Caco-2 (cell line): ENCODE measurements at regions of chr2 and their contacts with region 1.

Region 1: DNA sequence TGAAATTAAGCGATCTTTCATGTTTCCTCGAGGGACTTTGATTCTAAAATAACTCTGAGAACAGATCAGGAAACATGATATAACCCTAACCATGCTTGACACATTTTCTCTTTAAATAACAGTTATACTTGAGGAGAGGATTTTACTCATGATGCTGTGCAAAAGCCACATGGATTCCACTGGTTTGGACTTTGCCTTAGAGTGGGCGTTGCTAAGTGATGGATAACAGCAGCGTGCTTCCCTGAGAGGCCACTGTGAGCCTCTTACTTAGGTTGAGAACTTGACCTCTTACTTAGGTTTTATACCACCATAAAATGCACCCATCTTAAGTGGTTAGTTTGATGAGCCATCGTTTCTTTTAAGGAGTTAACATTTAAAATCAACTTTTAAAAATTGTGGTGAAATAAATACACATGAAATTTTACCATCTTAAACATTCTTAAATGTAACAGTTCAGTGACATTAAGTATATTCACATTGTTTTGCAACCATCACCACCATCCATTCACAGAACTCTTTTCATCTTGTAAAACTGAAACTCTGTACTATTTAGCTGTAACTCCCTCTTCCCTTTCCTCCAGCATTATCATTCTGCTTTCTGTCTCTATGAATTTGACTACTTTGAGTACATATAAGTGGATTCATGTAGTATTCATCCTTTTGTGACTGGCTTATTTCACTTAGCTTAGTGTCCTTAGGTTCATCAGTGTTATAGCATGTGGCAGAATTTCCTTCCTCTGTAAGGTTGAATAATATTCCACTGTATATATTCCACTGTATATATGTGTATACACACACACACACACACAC is 22.6 kb downstream of the ANXA4 start:
- DNase-seq: peak; percentile 76 to 79
- H3K4me3 ChIP-seq: no peak overlapping the region
- H3K4me3 Mint-ChIP-seq: peak overlapping the region; percentile 42
- H3K27ac Mint-ChIP-seq: peak overlapping the region; percentile 17
- H3K4me1 ChIP-seq: peaks cover 47% of the 10 kb centered on the region
- H3K4me1 Mint-ChIP-seq: peaks cover 54% of the 10 kb centered on the region
- H3K27me3 ChIP-seq: no peaks in the 10 kb centered on the region
- H3K27me3 Mint-ChIP-seq: no peaks in the 10 kb centered on the region
- CTCF ChIP-seq: no peak

Region 2: DNA sequence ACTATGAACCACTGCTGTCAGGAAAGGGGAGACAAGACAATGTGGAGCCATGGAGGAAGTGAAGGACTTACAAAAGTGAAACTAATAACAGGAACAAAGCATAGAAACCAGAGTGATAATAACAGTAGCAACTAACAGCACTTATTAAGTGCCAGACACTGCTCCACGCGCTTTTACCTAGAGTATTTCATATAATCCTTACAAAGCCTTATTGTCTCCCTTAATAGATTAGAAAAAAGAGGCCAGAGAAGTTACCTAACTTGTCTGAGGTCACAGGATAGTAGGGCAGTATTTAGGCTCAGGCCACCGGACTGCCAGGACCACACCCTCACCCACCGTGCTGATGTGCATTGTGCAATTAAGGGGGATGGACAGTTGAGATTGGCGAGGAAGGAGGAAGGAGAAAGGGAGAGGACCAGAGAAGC is 228.7 kb before region 1 on chr2:
- CTCF ChIA-PET with region 1: no interaction called
- POLR2A ChIA-PET with region 1: no interaction called
- intact Hi-C with region 1: no loop called
- DNase-seq: no peak
- H3K4me3 ChIP-seq: no peak overlapping the region
- H3K4me3 Mint-ChIP-seq: no peak overlapping the region
- H3K27ac Mint-ChIP-seq: no peak overlapping the region
- H3K4me1 ChIP-seq: peaks cover 17% of the 10 kb centered on the region
- H3K4me1 Mint-ChIP-seq: peaks cover 13% of the 10 kb centered on the region
- H3K27me3 ChIP-seq: no peaks in the 10 kb centered on the region
- H3K27me3 Mint-ChIP-seq: no peaks in the 10 kb centered on the region
- CTCF ChIP-seq: no peak

Region 3: DNA sequence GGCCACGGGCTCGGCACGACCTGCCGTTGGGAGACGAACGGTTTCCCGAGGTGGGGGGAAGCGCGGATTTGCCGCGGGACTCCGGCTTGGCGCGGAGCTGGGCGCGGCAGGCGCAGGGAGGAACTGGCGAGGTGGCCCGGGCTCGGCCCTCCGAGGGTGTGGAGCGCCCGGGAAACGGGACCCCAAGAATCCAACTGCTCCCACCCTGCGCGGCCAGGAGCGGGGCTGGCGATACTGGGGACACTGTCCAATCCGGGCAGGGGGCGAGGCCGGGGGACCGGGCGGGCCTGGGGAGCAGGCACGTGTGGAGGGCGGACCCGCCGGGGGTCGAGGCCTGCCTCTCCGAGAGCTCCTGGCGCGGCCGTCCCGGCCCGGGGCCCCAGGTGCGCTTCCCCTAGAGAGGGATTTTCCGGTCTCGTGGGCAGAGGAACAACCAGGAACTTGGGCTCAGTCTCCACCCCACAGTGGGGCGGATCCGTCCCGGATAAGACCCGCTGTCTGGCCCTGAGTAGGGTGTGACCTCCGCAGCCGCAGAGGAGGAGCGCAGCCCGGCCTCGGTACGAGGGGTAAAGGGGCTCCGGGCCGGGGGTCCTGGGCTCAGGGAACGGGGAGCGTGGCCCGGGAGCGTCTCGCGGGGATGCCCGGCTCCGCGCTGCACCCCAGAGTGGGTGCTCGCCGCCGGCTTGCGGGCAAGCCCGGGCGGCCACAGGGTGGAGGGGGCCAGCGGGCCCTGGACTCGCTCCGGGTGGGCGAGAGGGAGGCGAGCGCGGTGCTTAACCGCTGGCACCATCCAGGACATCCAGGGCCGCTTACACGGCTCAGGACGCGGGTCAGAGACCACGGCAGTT is 22.6 kb before region 1 on chr2 and contains the start of gene ANXA4:
- CTCF ChIA-PET with region 1: no interaction called
- POLR2A ChIA-PET with region 1: interaction called, 4 read pairs
- intact Hi-C with region 1: loop called (anchors 2 kb)
- DNase-seq: peak; percentile 92 to 93
- H3K4me3 ChIP-seq: peak within 1 kb of the TSS; percentile 78
- H3K4me3 Mint-ChIP-seq: peak within 1 kb of the TSS; percentile 97
- H3K27ac Mint-ChIP-seq: peak within 1 kb of the TSS; percentile 96
- H3K4me1 ChIP-seq: peaks cover 20% of the 10 kb centered on the region
- H3K4me1 Mint-ChIP-seq: peaks cover 23% of the 10 kb centered on the region
- H3K27me3 ChIP-seq: no peaks in the 10 kb centered on the region
- H3K27me3 Mint-ChIP-seq: no peaks in the 10 kb centered on the region
- CTCF ChIP-seq: no peak
- total RNA-seq, gene ANXA4: 90.8 and 92.0 TPM in 2 replicates

Region 4: GRCh38 chr2:69781321-69782248 is 17.1 kb after region 1 on chr2:
- CTCF ChIA-PET with region 1: interaction called, 3 read pairs
- POLR2A ChIA-PET with region 1: no interaction called
- intact Hi-C with region 1: loop called (anchors 1 kb)
- DNase-seq: peak; percentile 67 to 79
- H3K4me3 ChIP-seq: no peak overlapping the region
- H3K4me3 Mint-ChIP-seq: no peak overlapping the region
- H3K27ac Mint-ChIP-seq: peak overlapping the region; percentile 16
- H3K4me1 ChIP-seq: peaks cover 62% of the 10 kb centered on the region
- H3K4me1 Mint-ChIP-seq: peaks cover 39% of the 10 kb centered on the region
- H3K27me3 ChIP-seq: no peaks in the 10 kb centered on the region
- H3K27me3 Mint-ChIP-seq: no peaks in the 10 kb centered on the region
- CTCF ChIP-seq: no peak

Region 5: DNA sequence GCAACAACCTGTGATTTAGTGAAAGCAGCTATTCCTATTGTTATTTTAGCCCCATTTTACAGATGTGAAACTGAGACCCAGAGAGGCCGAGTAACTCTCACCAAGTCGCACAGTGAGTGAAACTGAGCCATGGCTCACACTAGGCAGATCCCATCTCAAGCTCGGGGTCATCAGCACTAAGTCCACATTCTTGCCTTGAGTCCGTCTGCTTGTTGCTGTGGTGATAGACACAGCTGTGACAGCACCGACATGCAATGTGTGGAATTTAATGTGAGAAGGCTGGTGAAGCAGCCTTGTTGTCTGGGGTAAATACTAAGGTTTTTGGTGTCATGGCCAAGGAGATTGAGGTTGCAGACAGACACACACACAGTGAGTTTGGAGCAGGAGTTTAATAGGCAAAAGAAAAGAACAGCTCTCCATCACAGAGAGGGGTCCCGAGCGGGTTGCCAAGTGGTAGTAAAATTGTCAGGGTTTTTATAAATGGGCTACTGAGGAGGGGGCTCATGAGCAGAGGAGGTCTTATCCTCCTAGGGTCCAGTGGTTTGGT is 24.8 kb after region 1 on chr2:
- CTCF ChIA-PET with region 1: no interaction called
- POLR2A ChIA-PET with region 1: interaction called, 3 read pairs
- intact Hi-C with region 1: loop called (anchors 1 kb)
- DNase-seq: peak; percentile 83 to 89
- H3K4me3 ChIP-seq: no peak overlapping the region
- H3K4me3 Mint-ChIP-seq: peak overlapping the region; percentile 61
- H3K27ac Mint-ChIP-seq: peak overlapping the region; percentile 100
- H3K4me1 ChIP-seq: peaks cover 40% of the 10 kb centered on the region
- H3K4me1 Mint-ChIP-seq: peaks cover 41% of the 10 kb centered on the region
- H3K27me3 ChIP-seq: no peaks in the 10 kb centered on the region
- H3K27me3 Mint-ChIP-seq: no peaks in the 10 kb centered on the region
- CTCF ChIP-seq: no peak

Region 6: GRCh38 chr2:69798909-69799526 is 34.5 kb after region 1 on chr2:
- CTCF ChIA-PET with region 1: no interaction called
- POLR2A ChIA-PET with region 1: no interaction called
- intact Hi-C with region 1: loop called (anchors 1 kb)
- DNase-seq: peak; percentile 63 to 71
- H3K4me3 ChIP-seq: peak overlapping the region; percentile 33
- H3K4me3 Mint-ChIP-seq: peak overlapping the region; percentile 71
- H3K27ac Mint-ChIP-seq: peak overlapping the region; percentile 92
- H3K4me1 ChIP-seq: peaks cover 49% of the 10 kb centered on the region
- H3K4me1 Mint-ChIP-seq: peaks cover 60% of the 10 kb centered on the region
- H3K27me3 ChIP-seq: no peaks in the 10 kb centered on the region
- H3K27me3 Mint-ChIP-seq: no peaks in the 10 kb centered on the region
- CTCF ChIP-seq: no peak